ENCODE measurements at regions of chr5 and their contacts with region 1.

Region 1: GRCh38 chr5:150217873-150218692 is 28.2 kb downstream of the SLC6A7 start:
- DNase-seq: peak; percentile 88
- H3K4me3 ChIP-seq: no peak overlapping the region
- H3K27ac ChIP-seq: no peak overlapping the region
- H3K4me1 ChIP-seq: no peaks in the 10 kb centered on the region
- H3K27me3 ChIP-seq: no peaks in the 10 kb centered on the region
- CTCF ChIP-seq: peak; percentile 88

Region 2: GRCh38 chr5:149636851-149637246 is 581.2 kb before region 1 on chr5:
- CTCF ChIA-PET with region 1: no interaction called
- POLR2A ChIA-PET with region 1: no interaction called
- intact Hi-C with region 1: loop called (anchors 2 kb)
- DNase-seq: peak; percentile 89
- H3K4me3 ChIP-seq: no peak overlapping the region
- H3K27ac ChIP-seq: no peak overlapping the region
- H3K4me1 ChIP-seq: no peaks in the 10 kb centered on the region
- H3K27me3 ChIP-seq: no peaks in the 10 kb centered on the region
- CTCF ChIP-seq: peak; percentile 97

Region 3: GRCh38 chr5:149834246-149834855 is 383.7 kb before region 1 on chr5:
- CTCF ChIA-PET with region 1: interaction called, 8 read pairs
- POLR2A ChIA-PET with region 1: no interaction called
- intact Hi-C with region 1: loop called (anchors 1 kb)
- DNase-seq: peak; percentile 88
- H3K4me3 ChIP-seq: no peak overlapping the region
- H3K27ac ChIP-seq: peak overlapping the region; percentile 28
- H3K4me1 ChIP-seq: peaks cover 21% of the 10 kb centered on the region
- H3K27me3 ChIP-seq: no peaks in the 10 kb centered on the region
- CTCF ChIP-seq: peak; percentile 88

Region 4: GRCh38 chr5:149990518-149991376 is 227.3 kb before region 1 on chr5:
- CTCF ChIA-PET with region 1: no interaction called
- POLR2A ChIA-PET with region 1: no interaction called
- intact Hi-C with region 1: loop called (anchors 5 kb)
- DNase-seq: peak; percentile 90
- H3K4me3 ChIP-seq: no peak overlapping the region
- H3K27ac ChIP-seq: peak overlapping the region; percentile 17
- H3K4me1 ChIP-seq: peaks cover 32% of the 10 kb centered on the region
- H3K27me3 ChIP-seq: no peaks in the 10 kb centered on the region
- CTCF ChIP-seq: peak; percentile 93

Region 5: GRCh38 chr5:150129813-150130492 is 88.1 kb before region 1 on chr5:
- CTCF ChIA-PET with region 1: no interaction called
- POLR2A ChIA-PET with region 1: no interaction called
- intact Hi-C with region 1: loop called (anchors 1 kb)
- DNase-seq: peak; percentile 67
- H3K4me3 ChIP-seq: no peak overlapping the region
- H3K27ac ChIP-seq: no peak overlapping the region
- H3K4me1 ChIP-seq: no peaks in the 10 kb centered on the region
- H3K27me3 ChIP-seq: no peaks in the 10 kb centered on the region
- CTCF ChIP-seq: peak; percentile 94

Region 6: DNA sequence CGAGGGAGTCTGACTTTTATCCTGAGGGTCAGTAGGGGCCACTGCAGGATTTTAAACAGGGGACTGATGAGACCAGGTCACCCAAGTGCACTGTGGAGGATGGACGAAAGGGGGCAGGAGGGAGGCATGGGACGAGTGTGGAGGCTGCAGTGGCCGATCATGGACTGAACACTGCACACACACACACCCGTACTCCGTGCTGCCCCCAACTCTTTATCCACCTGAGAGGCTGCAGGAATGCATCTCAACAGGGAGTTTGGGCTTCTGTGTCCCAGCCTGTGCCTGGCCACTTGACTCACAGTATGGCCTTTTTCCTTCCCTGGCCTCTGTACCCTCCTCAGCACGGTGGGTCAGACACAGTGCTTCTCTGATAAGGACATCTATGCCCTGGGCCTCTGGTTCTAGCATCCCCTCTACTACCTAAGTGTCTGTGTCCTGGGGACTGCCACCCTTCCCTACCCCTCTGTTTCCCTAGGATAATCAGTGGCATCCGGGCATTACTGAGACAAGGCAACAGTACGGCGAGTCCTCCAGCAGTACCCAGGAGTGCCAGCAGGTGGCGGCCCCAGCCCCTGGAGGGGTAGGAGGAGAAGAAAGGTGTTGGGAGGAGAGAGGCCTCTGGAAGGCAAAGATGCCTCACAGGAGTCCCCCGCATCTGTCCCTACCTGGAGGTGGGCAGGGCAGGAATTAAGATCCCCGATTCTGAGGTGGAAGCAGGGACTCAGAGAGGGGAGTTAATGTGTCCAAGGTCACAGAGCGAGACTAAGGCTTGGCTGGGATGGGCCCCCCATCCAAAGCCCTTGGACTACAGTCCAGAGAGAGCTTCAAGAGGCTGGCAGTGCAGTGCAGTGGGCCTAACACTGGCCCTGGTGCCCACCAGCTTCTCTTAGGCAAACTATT is 56.6 kb before region 1 on chr5:
- CTCF ChIA-PET with region 1: interaction called, 3 read pairs
- POLR2A ChIA-PET with region 1: no interaction called
- intact Hi-C with region 1: loop called (anchors 1 kb)
- DNase-seq: peak; percentile 87
- H3K4me3 ChIP-seq: no peak overlapping the region
- H3K27ac ChIP-seq: no peak overlapping the region
- H3K4me1 ChIP-seq: peaks cover 41% of the 10 kb centered on the region
- H3K27me3 ChIP-seq: no peaks in the 10 kb centered on the region
- CTCF ChIP-seq: peak; percentile 96

Region 7: DNA sequence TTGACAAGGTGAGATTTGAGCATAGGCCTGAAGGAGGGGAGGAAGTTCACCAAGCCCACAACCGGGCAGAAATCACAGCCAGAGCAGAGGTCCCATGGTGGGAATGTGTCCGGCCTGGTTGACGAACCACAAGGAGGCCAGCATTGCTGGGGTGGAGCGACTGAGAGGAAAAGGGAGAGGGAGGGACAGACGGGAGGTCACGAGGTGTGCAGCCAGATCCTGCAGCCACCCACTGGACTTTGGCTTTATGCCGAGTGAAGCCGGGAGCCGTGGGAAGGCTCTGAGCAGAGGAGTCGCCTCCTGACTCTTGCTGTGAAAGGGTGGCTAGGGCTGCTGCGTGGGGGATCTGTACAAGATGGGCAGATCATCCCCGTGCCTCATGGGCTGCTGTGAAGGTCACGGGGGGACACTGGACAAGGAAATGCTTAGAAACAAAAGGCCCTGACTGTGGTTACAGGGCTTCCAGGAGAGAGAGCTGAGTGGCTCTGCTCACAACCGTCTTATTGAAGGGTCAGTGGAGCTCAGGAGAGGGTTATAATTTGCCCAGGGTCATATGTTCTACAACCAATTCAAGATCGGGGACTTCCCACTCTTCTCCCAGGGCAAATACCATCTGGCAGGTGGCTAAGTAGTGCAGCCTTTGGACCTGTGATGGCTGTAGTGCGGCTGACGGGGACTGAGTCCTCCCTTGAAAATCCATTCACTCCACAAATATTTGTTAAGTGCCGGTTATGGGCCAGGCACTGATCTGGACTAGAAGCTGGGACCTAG is 210.2 kb after region 1 on chr5:
- CTCF ChIA-PET with region 1: interaction called, 13 read pairs
- POLR2A ChIA-PET with region 1: no interaction called
- intact Hi-C with region 1: no loop called
- DNase-seq: no peak
- H3K4me3 ChIP-seq: no peak overlapping the region
- H3K27ac ChIP-seq: no peak overlapping the region
- H3K4me1 ChIP-seq: no peaks in the 10 kb centered on the region
- H3K27me3 ChIP-seq: no peaks in the 10 kb centered on the region
- CTCF ChIP-seq: no peak